ENCODE measurements at regions of chr22 and their contacts with region 1.

Region 1: DNA sequence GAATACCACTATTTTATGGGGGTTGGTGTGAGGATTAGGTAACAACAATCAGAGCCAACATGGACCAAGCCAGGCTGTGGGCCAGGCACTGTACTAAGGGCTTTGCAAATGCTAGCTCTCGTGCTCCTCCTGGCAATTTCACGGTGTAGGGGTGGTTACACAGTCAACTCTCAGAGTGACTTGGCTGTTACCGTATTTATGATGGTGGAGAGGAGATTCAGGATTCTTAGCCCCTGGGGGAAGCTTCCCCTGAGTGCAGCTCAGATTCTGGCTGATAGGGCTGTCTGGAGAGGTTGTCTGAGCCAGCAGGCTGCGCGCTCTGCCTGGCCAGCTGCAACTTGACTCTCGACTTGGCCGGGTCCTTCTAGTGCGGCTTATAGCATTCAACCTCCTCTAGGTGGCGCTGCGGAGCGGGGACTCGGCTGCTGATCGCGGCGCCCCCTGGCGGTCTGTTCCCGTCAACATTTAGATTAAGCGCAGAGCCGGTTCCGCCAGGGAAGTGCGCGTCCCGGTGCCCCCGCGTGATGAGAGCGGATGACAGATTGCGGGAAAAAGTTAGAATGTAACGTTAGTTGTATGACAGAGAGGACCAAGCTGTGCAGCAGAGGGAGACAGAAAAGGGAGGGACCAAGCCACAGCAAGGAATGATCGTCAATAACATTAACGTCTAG is 4.5 kb upstream of the NCF4 start:
- DNase-seq: peak; percentile 96
- ATAC-seq: peak; percentile 63
- H3K4me3 Mint-ChIP-seq: peak overlapping the region; percentile 38
- H3K27ac Mint-ChIP-seq: peak overlapping the region; percentile 56
- H3K4me1 Mint-ChIP-seq: peaks cover 75% of the 10 kb centered on the region
- H3K27me3 Mint-ChIP-seq: peaks cover under 1% of the 10 kb centered on the region

Region 2: DNA sequence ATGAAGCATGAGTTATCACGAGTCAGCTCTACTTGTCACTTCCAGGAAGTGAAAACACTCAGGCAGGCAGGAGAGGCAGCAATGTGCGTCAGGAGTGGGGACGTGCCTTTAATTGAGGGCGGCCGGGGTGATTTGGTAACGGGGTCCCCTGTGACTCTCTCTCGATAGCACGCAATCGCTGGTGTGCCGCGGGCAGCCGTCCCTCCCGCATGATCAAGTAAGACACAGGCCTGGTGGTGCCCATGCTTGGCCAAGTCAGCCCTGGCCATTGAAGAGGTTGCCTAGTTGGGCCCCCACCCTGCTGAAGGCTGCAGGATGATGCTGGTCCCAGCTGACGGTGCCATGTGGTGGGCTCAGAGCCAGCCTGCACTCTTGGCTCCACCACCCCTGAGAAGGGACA is 182.4 kb before region 1 on chr22:
- CTCF ChIA-PET with region 1: no interaction called
- POLR2A ChIA-PET with region 1: no interaction called
- DNase-seq: no peak
- ATAC-seq: no peak
- H3K4me3 Mint-ChIP-seq: no peak overlapping the region
- H3K27ac Mint-ChIP-seq: no peak overlapping the region
- H3K4me1 Mint-ChIP-seq: peaks cover 5% of the 10 kb centered on the region
- H3K27me3 Mint-ChIP-seq: peaks cover 4% of the 10 kb centered on the region

Region 3: GRCh38 chr22:36775964-36776669 is 80.1 kb before region 1 on chr22 and contains the start of gene IFT27:
- CTCF ChIA-PET with region 1: interaction called, 332 read pairs
- POLR2A ChIA-PET with region 1: interaction called, 14 read pairs
- DNase-seq: peak; percentile 99
- ATAC-seq: peak; percentile 95
- H3K4me3 Mint-ChIP-seq: peak within 1 kb of the TSS; percentile 80
- H3K27ac Mint-ChIP-seq: peak within 1 kb of the TSS; percentile 91
- H3K4me1 Mint-ChIP-seq: peaks cover 31% of the 10 kb centered on the region
- H3K27me3 Mint-ChIP-seq: no peaks in the 10 kb centered on the region
- total RNA-seq, gene IFT27: 26.5 to 27.2 TPM

Region 4: GRCh38 chr22:36839356-36840073 is 16.7 kb before region 1 on chr22:
- CTCF ChIA-PET with region 1: interaction called, 26 read pairs
- POLR2A ChIA-PET with region 1: interaction called, 4 read pairs
- DNase-seq: no peak
- ATAC-seq: no peak
- H3K4me3 Mint-ChIP-seq: no peak overlapping the region
- H3K27ac Mint-ChIP-seq: no peak overlapping the region
- H3K4me1 Mint-ChIP-seq: peaks cover 9% of the 10 kb centered on the region
- H3K27me3 Mint-ChIP-seq: peaks cover 48% of the 10 kb centered on the region

Region 5: DNA sequence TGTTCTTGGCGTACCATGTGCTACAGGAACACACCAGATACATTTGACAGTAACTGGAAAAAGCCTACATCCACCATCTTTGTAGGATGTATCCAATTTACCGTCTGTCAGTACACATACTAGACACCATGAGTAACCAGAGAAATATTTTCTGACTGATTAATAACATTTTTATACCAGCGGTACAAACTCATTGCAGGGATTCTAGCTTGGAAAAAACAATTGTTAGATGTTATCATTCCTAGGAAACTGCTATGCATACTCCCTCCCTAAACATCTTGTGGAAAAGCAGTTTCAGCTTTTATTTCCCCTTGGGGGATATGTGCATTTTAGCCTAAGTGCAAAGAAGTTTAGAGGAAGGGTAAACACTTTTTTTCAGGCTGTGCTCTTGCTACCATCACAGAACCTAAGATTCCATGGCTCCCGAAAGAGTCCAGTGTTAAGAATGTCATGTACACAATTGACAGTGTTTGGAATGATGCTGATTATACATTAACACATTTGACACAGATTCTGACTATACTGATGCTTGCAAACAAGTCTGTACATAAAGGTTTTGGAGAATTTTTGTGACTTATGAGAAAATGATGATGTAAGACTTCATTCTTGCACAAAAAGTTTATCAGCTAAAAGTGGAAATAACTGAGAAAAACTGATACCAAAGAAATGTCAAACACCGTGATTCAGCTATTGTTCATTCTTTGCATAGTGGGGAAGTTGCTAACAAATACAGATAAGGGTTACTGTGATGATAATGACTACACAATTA is 28.3 kb after region 1 on chr22:
- CTCF ChIA-PET with region 1: interaction called, 17 read pairs
- POLR2A ChIA-PET with region 1: no interaction called
- DNase-seq: no peak
- ATAC-seq: no peak
- H3K4me3 Mint-ChIP-seq: no peak overlapping the region
- H3K27ac Mint-ChIP-seq: no peak overlapping the region
- H3K4me1 Mint-ChIP-seq: peaks cover 12% of the 10 kb centered on the region
- H3K27me3 Mint-ChIP-seq: peaks cover 3% of the 10 kb centered on the region

Region 6: GRCh38 chr22:36910461-36910860 is 54.2 kb after region 1 on chr22:
- CTCF ChIA-PET with region 1: interaction called, 11 read pairs
- POLR2A ChIA-PET with region 1: interaction called, 4 read pairs
- DNase-seq: no peak
- ATAC-seq: no peak
- H3K4me3 Mint-ChIP-seq: no peak overlapping the region
- H3K27ac Mint-ChIP-seq: no peak overlapping the region
- H3K4me1 Mint-ChIP-seq: no peaks in the 10 kb centered on the region
- H3K27me3 Mint-ChIP-seq: peaks cover 34% of the 10 kb centered on the region

Region 7: GRCh38 chr22:36955701-36956100 is 99.4 kb after region 1 on chr22:
- CTCF ChIA-PET with region 1: no interaction called
- POLR2A ChIA-PET with region 1: no interaction called
- DNase-seq: no peak
- ATAC-seq: no peak
- H3K4me3 Mint-ChIP-seq: no peak overlapping the region
- H3K27ac Mint-ChIP-seq: no peak overlapping the region
- H3K4me1 Mint-ChIP-seq: no peaks in the 10 kb centered on the region
- H3K27me3 Mint-ChIP-seq: peaks cover 5% of the 10 kb centered on the region

Region 8: DNA sequence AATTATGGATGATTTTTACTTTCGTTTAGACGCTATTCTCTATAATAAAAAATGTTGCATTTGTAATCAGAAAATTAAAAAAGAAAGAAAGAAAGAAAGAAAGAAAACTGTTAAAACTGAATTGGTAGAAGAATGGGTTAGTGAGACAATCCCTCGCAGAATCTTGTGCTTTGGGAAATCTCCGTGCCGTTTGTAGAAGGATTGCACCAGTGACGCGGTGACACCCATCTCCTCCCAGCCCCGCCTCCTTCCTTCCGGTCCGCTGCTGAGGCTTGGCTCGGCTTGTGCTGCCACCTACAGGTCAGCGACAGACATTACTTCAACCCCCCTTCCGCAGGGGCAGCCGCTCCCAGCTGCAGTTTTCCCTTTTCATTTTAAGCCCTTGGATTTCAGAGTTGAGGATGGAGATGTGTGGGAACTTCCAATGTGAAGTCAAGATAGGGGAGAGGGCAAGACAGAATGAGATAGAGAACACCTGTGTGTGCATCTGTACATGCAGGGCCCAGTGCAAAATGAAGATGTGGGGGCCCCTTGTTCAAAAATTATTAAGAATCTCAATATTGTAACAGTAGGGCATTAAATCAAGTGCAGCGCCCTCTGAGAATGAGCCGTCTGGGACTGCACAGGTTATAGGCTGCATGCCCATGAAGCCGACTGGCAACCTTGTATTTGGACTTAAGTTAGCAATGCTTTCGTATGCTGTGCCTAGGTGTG is 121.8 kb after region 1 on chr22:
- CTCF ChIA-PET with region 1: interaction called, 150 read pairs
- POLR2A ChIA-PET with region 1: no interaction called
- DNase-seq: peak; percentile 94
- ATAC-seq: peak; percentile 88
- H3K4me3 Mint-ChIP-seq: peak overlapping the region; percentile 85
- H3K27ac Mint-ChIP-seq: peak overlapping the region; percentile 92
- H3K4me1 Mint-ChIP-seq: peaks cover 20% of the 10 kb centered on the region
- H3K27me3 Mint-ChIP-seq: peaks cover 5% of the 10 kb centered on the region

Measured in activated CD8-positive, alpha-beta T cell treated with anti-CD3 and anti-CD28 coated beads, Interleukin-2, amount 10 ng/mL, durations not matched to agents 7 days and 5 days (primary cell).